ENCODE measurements at regions of chr14 and their contacts with region 1.

Region 1: DNA sequence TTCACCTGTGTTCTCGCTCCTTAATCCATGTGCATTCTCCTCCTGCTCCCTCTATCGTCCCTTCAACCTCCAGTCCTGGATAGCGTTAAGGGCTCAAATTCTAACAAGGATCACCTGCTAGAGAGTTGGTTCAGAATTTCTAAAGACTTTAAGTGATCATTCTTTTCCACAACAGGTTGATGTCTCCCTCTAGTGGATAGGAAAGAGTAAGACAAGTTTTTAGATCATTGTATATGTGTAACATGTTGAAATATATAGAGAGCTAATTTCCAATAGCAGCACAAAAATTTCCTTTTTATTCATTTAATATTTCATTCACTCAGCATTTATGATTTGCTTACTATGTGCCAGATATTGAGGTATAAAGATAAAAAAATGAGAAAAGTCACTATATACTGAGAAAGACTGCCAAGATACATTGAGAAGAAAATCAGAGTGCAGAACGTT is 9.3 kb upstream of the ESR2 start:
- DNase-seq: peak in 1 of 2 donors; percentile 67
- ATAC-seq: peak; percentile 71 to 81 (median 76)
- H3K4me3 ChIP-seq: no peak overlapping the region
- H3K4me3 Mint-ChIP-seq: no peak overlapping the region
- H3K27ac ChIP-seq: no peak overlapping the region
- H3K27ac Mint-ChIP-seq: no peak overlapping the region
- H3K4me1 ChIP-seq: no peaks in the 10 kb centered on the region
- H3K4me1 Mint-ChIP-seq: peaks cover 0 to 5% of the 10 kb centered on the region in 2 donors
- H3K27me3 ChIP-seq: no peaks in the 10 kb centered on the region
- H3K27me3 Mint-ChIP-seq: peaks cover 8 to 13% of the 10 kb centered on the region in 2 donors
- CTCF ChIP-seq: peak; percentile 88

Region 2: DNA sequence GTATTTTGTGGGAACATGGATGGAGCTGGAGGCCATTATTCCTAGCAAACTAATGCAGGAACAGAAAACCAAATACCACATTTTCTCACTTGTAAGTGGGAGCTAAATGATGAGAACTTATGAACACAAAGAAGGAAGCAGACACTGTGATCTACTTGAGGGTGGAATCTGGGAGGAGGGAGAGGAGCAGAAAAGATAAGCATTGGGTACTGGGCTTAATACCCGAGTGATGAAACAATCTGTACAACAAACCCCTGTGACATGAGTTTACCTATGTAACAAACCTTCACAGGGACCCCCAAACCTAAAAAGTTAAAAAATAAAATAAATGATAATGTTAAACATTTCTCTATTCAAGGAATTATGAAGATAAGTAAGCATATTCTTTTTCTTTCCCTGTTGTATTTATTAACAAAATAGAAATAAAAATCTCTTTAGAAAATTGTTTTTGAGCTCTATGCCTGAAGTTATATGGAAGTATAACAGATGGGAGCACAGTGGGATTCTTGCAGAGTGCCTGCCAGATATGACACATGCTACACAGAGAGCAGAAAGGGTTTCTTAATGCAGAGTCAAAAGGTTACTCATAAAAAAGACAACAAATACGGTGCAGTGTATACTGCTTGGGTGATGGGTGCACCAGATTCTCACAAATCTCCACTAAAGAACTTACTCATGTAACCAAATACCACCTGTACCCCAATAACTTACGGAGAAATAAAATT is 502.7 kb before region 1 on chr14:
- intact Hi-C with region 1: loop called (anchors 2 kb)
- DNase-seq: no peak
- ATAC-seq: no peak
- H3K4me3 ChIP-seq: no peak overlapping the region
- H3K4me3 Mint-ChIP-seq: no peak overlapping the region
- H3K27ac ChIP-seq: no peak overlapping the region
- H3K27ac Mint-ChIP-seq: no peak overlapping the region
- H3K4me1 ChIP-seq: no peaks in the 10 kb centered on the region
- H3K4me1 Mint-ChIP-seq: peaks cover 0 to 5% of the 10 kb centered on the region in 2 donors
- H3K27me3 ChIP-seq: peaks cover 2% of the 10 kb centered on the region
- H3K27me3 Mint-ChIP-seq: peaks cover 7 to 15% of the 10 kb centered on the region in 2 donors
- CTCF ChIP-seq: no peak

Region 3: DNA sequence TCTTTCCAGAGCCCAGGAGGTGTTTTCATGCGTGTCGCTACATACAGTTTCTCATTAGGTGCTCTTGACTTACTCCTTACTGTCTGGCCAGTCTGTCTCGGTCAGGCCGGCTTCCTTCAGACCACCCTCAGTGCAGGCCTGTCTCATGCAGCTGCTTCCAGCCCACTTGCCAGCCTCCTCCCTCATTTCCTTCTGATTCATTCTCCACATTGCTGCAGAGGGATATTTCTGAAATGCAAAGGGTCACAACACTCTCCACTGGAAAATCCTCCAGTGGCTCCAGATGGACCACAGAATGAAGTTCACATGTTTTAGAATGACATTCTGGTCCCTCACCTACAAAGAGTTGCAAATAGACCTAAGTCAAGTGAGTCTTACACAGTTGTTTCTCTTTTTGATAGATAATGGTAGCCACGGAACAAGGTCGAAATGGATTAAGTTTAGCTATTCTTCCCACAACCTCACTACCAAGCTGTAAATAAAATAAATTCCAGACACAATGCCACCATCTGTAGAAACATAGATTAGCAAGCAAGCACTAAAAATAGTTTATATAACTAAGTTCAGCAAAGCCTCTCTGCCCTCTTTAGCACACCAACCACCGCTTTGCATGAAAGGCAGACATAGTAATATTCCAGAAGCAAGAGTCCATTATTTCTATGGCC is 156.2 kb before region 1 on chr14:
- intact Hi-C with region 1: loop called (anchors 5 kb)
- DNase-seq: no peak
- ATAC-seq: no peak
- H3K4me3 ChIP-seq: no peak overlapping the region
- H3K4me3 Mint-ChIP-seq: no peak overlapping the region
- H3K27ac ChIP-seq: no peak overlapping the region
- H3K27ac Mint-ChIP-seq: peak overlapping the region in 1 of 2 donors; percentile 66
- H3K4me1 ChIP-seq: no peaks in the 10 kb centered on the region
- H3K4me1 Mint-ChIP-seq: no peaks in the 10 kb centered on the region
- H3K27me3 ChIP-seq: no peaks in the 10 kb centered on the region
- H3K27me3 Mint-ChIP-seq: no peaks in the 10 kb centered on the region
- CTCF ChIP-seq: no peak